Natural killer cell (primary cell): ENCODE measurements at regions of chr15 and their contacts with region 1.

Region 1: DNA sequence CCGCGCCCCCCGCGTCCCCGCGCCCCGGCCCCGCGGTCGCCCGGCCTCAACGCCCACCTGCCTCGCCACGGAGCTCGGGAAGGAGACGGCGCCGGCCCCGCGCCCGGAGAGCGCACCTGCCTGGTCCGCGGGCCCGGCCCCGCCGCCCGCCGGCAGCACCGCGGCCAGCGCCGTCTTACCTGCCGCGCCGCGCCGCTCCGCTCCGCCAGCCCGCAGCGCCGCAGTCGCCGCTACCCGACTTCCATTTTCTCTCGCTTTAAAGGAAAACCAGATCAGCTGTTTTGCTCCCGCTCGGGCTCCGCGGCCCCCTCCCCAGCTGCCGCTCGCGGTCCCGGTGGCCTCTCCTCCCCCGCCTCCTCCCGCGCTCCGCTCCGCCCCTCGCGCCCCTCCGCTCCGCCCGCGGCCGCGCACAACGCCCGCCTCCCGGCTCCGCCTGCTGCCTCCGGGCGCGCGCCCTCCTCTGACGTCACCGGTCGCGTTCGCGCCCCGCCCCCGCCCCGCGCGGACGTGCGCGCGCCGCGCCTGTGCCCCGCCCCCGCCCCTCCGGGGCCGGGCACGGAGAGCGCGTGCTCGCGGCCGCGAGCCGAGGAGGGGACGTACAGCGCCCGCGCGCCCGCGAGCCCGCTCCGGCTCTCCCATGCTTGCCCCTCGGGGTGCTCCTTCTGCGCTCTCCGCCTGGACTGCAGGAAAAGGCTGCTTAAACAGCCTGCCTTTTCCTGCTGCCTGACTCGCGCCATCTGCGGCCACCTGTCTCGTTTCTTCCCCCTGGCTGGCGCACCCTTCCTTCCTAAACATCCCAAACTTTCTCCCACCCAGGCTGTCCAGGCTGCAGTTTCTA is 159.8 kb upstream of the CHRNA7 start:
- DNase-seq: peak; percentile 84 to 93
- ATAC-seq: peak; percentile 88 to 97 (median 91)
- H3K4me3 ChIP-seq: peak within 1 kb of the TSS; percentile 50
- H3K4me3 Mint-ChIP-seq: peak within 1 kb of the TSS; percentile 97
- H3K27ac ChIP-seq: peak within 1 kb of the TSS; percentile 39
- H3K27ac Mint-ChIP-seq: peak within 1 kb of the TSS; percentile 71 to 93
- H3K4me1 ChIP-seq: peaks cover 13% of the 10 kb centered on the region
- H3K4me1 Mint-ChIP-seq: peaks cover 9 to 14% of the 10 kb centered on the region in 2 donors
- H3K27me3 ChIP-seq: peaks cover 10% of the 10 kb centered on the region
- H3K27me3 Mint-ChIP-seq: peaks cover 11 to 30% of the 10 kb centered on the region in 2 donors
- CTCF ChIP-seq: no peak

Region 2: GRCh38 chr15:31843426-31844055 is 27.0 kb before region 1 on chr15:
- intact Hi-C with region 1: loop called (anchors 2 kb)
- DNase-seq: no peak
- ATAC-seq: no peak
- H3K4me3 ChIP-seq: no peak overlapping the region
- H3K4me3 Mint-ChIP-seq: no peak overlapping the region
- H3K27ac ChIP-seq: no peak overlapping the region
- H3K27ac Mint-ChIP-seq: no peak overlapping the region
- H3K4me1 ChIP-seq: no peaks in the 10 kb centered on the region
- H3K4me1 Mint-ChIP-seq: no peaks in the 10 kb centered on the region
- H3K27me3 ChIP-seq: no peaks in the 10 kb centered on the region
- H3K27me3 Mint-ChIP-seq: peaks cover 16 to 23% of the 10 kb centered on the region in 2 donors
- CTCF ChIP-seq: no peak